ENCODE measurements at regions of chr19 and their contacts with region 1.

Region 1: GRCh38 chr19:4870025-4870700 is 2.7 kb upstream of the PLIN3 start:
- DNase-seq: peak; percentile 42 to 54
- H3K4me3 ChIP-seq: no peak overlapping the region
- H3K27ac ChIP-seq: peak overlapping the region in 1 of 5 donors; percentile 46
- H3K4me1 ChIP-seq: peaks cover 6 to 40% (median 17%) of the 10 kb centered on the region in 4 donors
- H3K27me3 ChIP-seq: no peaks in the 10 kb centered on the region
- CTCF ChIP-seq: no peak
- EP300 ChIP-seq: no peak
- POLR2A ChIP-seq: no peak

Region 2: DNA sequence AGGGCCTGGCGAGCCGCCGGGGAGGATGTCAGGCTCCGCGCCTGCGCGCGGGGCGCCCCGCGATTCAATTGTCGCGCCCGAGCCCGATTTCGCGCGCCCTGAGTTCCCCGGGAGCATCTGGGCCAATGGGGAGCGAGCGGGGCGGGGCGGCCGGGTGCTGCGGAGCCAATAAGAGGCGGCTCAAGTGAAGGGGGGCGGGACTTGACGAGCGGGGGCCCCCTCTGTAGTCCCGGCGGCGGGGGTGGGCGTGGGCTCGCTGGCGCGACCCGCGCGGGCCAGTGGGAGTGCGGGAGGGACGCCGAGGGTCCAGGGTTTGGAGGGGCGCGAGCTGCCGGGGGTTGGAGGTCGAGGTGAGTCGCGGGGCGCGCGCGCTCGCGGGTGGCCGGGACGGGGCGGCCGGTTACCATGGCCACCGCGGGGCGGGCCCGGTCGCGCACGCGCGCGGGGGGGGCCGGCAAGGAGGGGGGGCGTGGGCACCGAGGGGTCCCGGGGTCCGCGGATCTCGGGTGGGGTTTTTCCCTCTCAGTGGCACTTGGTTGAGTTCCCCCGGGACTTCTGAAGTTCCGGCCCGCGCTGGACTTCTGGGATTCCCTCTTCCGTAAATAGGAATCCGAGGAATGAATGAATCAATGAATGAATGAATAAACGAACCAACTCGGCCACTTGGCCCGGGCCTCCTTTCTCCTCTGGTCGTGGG is 39.9 kb after region 1 on chr19:
- intact Hi-C with region 1: loop called (anchors 5 kb)
- DNase-seq: peak; percentile 93 to 97
- H3K4me3 ChIP-seq: peak overlapping the region; percentile 66 to 82 (median 74)
- H3K27ac ChIP-seq: peak overlapping the region in 4 of 5 donors; percentile 9 to 71 (median 52)
- H3K4me1 ChIP-seq: peaks cover 24 to 56% (median 37%) of the 10 kb centered on the region in 4 donors
- H3K27me3 ChIP-seq: peaks cover 0 to 15% (median 10%) of the 10 kb centered on the region in 3 donors
- CTCF ChIP-seq: no peak
- EP300 ChIP-seq: no peak
- POLR2A ChIP-seq: no peak

Region 3: DNA sequence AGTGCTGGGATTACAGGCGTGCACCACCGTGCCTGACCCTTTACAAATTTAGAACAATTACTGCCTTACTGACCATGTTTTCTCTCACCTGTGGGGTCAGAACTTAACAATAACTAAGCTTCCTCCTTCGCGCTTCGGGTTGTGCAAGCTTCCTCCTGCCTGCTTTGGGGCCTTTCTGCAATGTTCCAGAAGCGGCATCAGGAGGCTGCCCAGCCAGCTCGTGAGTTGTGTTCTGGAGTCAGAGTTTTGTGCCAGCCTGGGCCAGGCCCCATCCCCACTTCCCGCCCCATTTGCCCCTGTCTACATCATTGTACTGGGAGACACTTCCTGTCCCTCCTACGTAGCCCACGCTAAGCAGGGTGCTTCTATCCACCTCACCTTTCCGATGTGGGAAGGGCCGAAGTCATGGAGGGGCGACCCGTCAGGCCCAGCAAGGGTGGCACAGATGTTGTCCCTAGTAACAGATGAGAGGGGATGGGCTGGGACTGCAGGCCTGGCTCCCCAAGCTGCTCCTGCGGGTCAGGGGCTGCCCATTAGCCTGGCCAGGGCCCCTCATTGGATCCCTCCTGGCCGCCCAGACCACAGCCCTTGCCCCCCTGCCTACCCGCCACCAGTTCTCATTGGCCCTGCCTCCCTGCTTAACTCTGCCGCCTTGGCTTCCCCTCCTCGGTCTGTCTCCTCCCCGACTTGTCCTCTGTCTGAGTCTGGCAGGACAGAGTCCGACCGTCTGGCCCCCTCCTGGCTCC is 52.5 kb after region 1 on chr19:
- intact Hi-C with region 1: no loop called
- DNase-seq: no peak
- H3K4me3 ChIP-seq: no peak overlapping the region
- H3K27ac ChIP-seq: peak overlapping the region in 1 of 5 donors; percentile 2
- H3K4me1 ChIP-seq: no peaks in the 10 kb centered on the region
- H3K27me3 ChIP-seq: no peaks in the 10 kb centered on the region
- CTCF ChIP-seq: no peak
- EP300 ChIP-seq: no peak
- POLR2A ChIP-seq: no peak

Region 4: GRCh38 chr19:5031231-5032100 is 161.3 kb after region 1 on chr19:
- intact Hi-C with region 1: loop called (anchors 5 kb)
- DNase-seq: peak; percentile 86 to 92
- H3K4me3 ChIP-seq: no peak overlapping the region
- H3K27ac ChIP-seq: no peak overlapping the region
- H3K4me1 ChIP-seq: peaks cover 12 to 63% (median 30%) of the 10 kb centered on the region in 4 donors
- H3K27me3 ChIP-seq: no peaks in the 10 kb centered on the region
- CTCF ChIP-seq: peak in 5 of 7 experiments; percentile 88 to 95 (median 89)
- EP300 ChIP-seq: no peak
- POLR2A ChIP-seq: no peak

Measured in stomach (tissue), 19 donors.